H1 (cell line): ENCODE measurements at regions of chr11 and their contacts with region 1.

Region 1: DNA sequence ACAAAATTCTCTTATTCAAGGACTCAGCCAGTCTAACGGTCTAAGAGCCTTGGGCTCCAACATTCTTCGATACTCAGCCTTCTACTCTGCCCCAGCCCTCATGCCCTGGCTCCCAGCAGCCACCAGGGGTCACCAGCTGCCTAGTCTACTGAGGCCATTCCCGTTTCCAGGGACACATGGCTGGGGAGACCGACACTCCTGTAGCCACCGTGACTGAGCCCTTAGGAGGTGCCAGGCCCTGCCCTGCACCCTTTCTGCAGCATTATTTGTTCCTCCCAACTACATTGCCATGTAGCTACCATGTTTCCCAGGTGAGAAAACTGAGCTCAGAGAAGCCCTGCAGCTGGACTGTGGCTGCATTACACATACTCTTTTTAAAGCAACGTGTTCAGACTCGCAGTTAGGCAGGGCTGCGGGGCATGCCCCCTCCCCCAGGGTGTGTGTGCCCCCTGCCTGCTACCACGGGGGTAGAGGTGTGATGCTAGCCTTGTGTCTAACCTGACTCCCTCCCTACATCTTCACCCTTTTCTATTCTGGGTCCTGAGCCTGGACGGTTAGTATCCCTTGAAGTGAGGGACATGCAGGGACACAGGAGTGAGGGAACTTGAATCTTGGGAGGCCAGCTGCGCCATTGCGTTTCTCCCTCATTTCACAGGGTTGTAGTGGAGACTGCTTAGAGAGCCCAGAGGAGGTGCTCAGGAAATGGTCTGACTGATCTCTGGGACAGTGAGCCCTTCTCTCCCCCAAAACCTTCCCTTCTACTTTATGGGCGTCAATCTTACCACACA is 17.5 kb downstream of the ATG16L2 start:
- DNase-seq: peak; percentile 58 to 90
- H3K4me3 ChIP-seq: no peak overlapping the region
- H3K27ac ChIP-seq: no peak overlapping the region
- H3K4me1 ChIP-seq: peaks cover 0 to 5% (median 4%) of the 10 kb centered on the region in 4 experiments; a peak in 6 of 7 replicates
- H3K27me3 ChIP-seq: no peaks in the 10 kb centered on the region; a peak in 1 of 7 replicates
- CTCF ChIP-seq: peak; percentile 94 to 99 (median 96)
- EP300 ChIP-seq: no peak
- POLR2A ChIP-seq: no peak
- RAD21 ChIP-seq: peak; percentile 99

Region 2: DNA sequence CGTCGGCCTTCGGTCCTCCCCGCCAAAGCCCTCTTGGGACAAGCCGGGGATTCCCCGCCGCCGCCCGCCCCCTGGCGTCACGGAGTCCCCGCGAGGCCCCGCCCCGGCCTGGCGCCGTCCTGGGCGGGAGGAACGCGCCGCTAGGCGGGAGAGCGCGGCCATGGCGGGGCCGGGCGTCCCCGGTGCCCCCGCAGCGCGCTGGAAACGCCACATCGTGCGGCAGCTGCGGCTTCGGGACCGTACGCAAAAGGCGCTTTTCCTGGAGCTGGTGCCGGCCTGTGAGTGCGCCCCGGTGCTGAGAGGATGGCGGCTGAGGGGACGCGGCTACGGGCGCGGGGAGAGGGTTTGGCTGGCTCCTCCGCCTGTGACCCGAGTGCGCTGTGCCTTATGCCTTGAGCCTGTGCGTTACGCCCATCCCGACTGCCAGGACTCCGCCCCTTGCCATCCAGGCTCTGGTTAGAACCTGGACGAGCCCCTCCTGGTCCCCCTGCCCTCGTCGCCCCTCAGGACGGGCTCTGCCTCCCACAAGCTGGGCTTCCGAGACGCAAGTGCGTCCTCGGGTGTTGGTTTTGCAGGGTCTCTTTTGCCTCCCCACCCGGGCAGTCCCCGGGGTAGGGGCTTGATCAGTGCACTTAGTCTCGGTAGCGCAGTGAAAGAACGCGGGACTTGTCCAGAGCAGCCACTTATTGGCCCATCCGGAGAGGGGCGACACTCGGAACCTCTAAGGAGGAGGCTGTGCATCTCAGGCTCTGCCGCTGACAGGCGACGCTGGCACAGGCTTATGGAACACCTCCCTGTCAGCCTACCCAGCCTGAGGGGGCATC is 17.2 kb before region 1 on chr11 and contains the start of gene ATG16L2:
- CTCF ChIA-PET with region 1: interaction called, 11 read pairs
- POLR2A ChIA-PET with region 1: interaction called, 3 read pairs
- DNase-seq: peak; percentile 50 to 93
- H3K4me3 ChIP-seq: peak within 1 kb of the TSS; percentile 58 to 84 (median 79)
- H3K27ac ChIP-seq: peak within 1 kb of the TSS; percentile 93
- H3K4me1 ChIP-seq: peaks cover 0 to 15% (median 9%) of the 10 kb centered on the region in 4 experiments; a peak in 5 of 7 replicates
- H3K27me3 ChIP-seq: peaks cover 0 to 7% (median 4%) of the 10 kb centered on the region in 4 experiments; a peak in 4 of 7 replicates
- CTCF ChIP-seq: peak in 1 of 3 experiments; percentile 17; a peak in 2 of 4 replicates
- EP300 ChIP-seq: no peak
- POLR2A ChIP-seq: peak in 1 of 2 experiments; percentile 91; a peak in 2 of 3 replicates
- RAD21 ChIP-seq: peak; percentile 1 to 37; a peak in 1 of 4 replicates
- total RNA-seq, gene ATG16L2: 11.0 and 11.7 TPM in 2 replicates

Region 3: GRCh38 chr11:72924568-72925190 is 93.0 kb after region 1 on chr11:
- CTCF ChIA-PET with region 1: interaction called, 12 read pairs
- POLR2A ChIA-PET with region 1: no interaction called
- DNase-seq: no peak
- H3K4me3 ChIP-seq: no peak overlapping the region
- H3K27ac ChIP-seq: no peak overlapping the region
- H3K4me1 ChIP-seq: no peaks in the 10 kb centered on the region
- H3K27me3 ChIP-seq: no peaks in the 10 kb centered on the region
- CTCF ChIP-seq: peak in 1 of 3 experiments; percentile 29; a peak in 1 of 4 replicates
- EP300 ChIP-seq: no peak
- POLR2A ChIP-seq: no peak
- RAD21 ChIP-seq: peak; percentile 29 to 37; a peak in 3 of 4 replicates

Region 4: DNA sequence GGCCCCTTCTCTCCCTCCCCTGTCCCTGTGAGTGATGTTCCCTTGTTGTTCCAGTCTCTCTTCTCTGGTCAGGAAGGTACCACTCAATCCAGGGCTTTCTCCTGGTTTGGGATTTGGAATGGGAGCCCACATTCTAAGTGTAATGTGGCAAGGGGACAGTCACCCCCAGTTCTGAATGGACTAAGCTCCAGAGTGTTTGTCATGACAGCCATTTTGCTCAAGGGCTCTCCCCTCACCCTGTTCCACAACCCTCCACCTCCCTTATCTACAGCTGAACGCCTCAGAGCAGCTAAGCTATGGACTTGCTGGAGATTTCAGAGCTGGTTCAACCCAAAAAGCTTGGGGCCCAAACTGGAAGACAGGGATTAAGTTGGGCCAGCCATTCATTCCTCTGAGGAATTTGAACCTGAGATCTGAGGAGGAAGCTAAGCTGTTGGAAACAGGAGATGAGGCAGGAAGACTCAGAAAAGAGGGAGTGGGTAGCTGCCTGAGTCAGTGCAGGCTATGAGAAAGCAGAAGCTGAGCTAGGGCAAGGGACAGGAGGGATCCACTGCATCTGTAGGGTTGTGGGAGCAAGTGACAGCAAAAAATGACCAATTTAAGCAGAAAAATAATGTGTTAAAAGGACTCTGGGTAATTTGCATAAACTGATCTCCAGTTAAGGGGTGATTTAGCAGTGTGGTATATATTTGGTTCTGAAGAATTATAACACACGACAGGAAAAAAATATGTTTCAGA is 333.3 kb after region 1 on chr11:
- CTCF ChIA-PET with region 1: interaction called, 18 read pairs
- POLR2A ChIA-PET with region 1: no interaction called
- DNase-seq: no peak
- H3K4me3 ChIP-seq: no peak overlapping the region
- H3K27ac ChIP-seq: no peak overlapping the region
- H3K4me1 ChIP-seq: peaks cover 0 to 5% (median 3%) of the 10 kb centered on the region in 4 experiments; a peak in 2 of 7 replicates
- H3K27me3 ChIP-seq: no peaks in the 10 kb centered on the region; a peak in 1 of 7 replicates
- CTCF ChIP-seq: no peak
- EP300 ChIP-seq: no peak
- POLR2A ChIP-seq: no peak
- RAD21 ChIP-seq: no peak

Region 5: DNA sequence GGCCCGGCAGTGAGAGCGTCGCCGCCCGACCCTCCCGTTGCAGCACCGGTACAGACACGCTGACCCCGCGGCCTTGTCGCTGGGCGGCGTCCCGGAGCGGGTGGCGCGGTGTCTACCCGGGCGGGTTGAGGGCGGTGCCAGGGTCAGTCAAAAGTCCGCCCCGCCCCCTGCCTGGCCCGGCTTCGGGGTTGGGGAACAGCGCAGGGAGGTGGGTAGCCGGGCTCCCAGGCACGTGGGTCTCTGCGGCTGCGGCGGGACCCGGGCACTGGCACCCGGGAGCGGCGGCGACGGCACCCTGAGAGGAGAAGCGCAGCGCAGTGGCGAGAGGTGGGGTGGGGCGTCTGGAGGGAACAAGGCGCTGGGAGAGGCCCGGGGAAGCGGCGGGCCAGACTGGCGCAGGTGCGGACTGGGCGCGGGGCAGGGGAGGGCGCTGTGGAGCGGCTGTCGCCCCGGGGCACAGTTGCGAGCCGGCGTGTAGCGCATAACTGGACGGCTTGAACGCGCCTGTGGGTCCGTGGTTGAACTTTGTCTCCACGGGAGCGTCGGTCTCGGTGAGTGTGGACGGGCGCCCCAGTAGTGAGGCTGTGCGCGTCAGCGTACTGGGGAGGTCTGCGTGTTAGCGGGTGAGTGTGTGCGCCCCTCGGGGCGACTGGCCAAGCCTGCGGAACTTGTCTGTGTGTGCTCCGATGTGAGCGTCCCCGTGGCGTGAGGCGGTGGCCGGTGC is 386.6 kb after region 1 on chr11 and contains the start of gene P2RY2:
- CTCF ChIA-PET with region 1: interaction called, 10 read pairs
- POLR2A ChIA-PET with region 1: no interaction called
- DNase-seq: peak; percentile 15 to 91
- H3K4me3 ChIP-seq: peak within 1 kb of the TSS; percentile 58 to 69 (median 64)
- H3K27ac ChIP-seq: no peak within 1 kb of the TSS
- H3K4me1 ChIP-seq: peaks cover 0 to 5% (median 2%) of the 10 kb centered on the region in 4 experiments; a peak in 5 of 7 replicates
- H3K27me3 ChIP-seq: peaks cover 2 to 35% (median 31%) of the 10 kb centered on the region in 4 experiments
- CTCF ChIP-seq: peak; percentile 47 to 70 (median 64)
- EP300 ChIP-seq: no peak
- POLR2A ChIP-seq: no peak
- RAD21 ChIP-seq: peak; percentile 22 to 27; a peak in 2 of 4 replicates
- total RNA-seq, gene P2RY2: 1.0 and 1.2 TPM in 2 replicates